Activated T-helper 1 cell treated with anti-CD3 and anti-CD28 coated beads, Interleukin-12 subunit alpha, Interleukin-12 subunit beta, Interleukin-2, Interleukin-4 antibody, amounts not matched to agents 30 ng/mL and 10 ng/mL and 1 ng/mL, durations not matched to agents 14 hours and 24 hours and 36 hours (primary cell): ENCODE measurements at regions of chr22 and their contacts with region 1.

Region 1: GRCh38 chr22:31489604-31490495 is at the start of gene EIF4ENIF1:
- DNase-seq: peak; percentile 81
- H3K4me3 Mint-ChIP-seq: peak within 1 kb of the TSS; percentile 91
- H3K27ac Mint-ChIP-seq: peak within 1 kb of the TSS; percentile 99
- H3K4me1 Mint-ChIP-seq: peaks cover 56% of the 10 kb centered on the region
- H3K27me3 Mint-ChIP-seq: no peaks in the 10 kb centered on the region
- total RNA-seq, gene EIF4ENIF1: 101 and 105 TPM in 2 replicates

Region 2: GRCh38 chr22:31345331-31346254 is 144.3 kb before region 1 on chr22:
- intact Hi-C with region 1: loop called (anchors 2 kb)
- DNase-seq: peak; percentile 85
- H3K4me3 Mint-ChIP-seq: peak overlapping the region; percentile 87
- H3K27ac Mint-ChIP-seq: peak overlapping the region; percentile 89
- H3K4me1 Mint-ChIP-seq: peaks cover 48% of the 10 kb centered on the region
- H3K27me3 Mint-ChIP-seq: no peaks in the 10 kb centered on the region

Region 3: DNA sequence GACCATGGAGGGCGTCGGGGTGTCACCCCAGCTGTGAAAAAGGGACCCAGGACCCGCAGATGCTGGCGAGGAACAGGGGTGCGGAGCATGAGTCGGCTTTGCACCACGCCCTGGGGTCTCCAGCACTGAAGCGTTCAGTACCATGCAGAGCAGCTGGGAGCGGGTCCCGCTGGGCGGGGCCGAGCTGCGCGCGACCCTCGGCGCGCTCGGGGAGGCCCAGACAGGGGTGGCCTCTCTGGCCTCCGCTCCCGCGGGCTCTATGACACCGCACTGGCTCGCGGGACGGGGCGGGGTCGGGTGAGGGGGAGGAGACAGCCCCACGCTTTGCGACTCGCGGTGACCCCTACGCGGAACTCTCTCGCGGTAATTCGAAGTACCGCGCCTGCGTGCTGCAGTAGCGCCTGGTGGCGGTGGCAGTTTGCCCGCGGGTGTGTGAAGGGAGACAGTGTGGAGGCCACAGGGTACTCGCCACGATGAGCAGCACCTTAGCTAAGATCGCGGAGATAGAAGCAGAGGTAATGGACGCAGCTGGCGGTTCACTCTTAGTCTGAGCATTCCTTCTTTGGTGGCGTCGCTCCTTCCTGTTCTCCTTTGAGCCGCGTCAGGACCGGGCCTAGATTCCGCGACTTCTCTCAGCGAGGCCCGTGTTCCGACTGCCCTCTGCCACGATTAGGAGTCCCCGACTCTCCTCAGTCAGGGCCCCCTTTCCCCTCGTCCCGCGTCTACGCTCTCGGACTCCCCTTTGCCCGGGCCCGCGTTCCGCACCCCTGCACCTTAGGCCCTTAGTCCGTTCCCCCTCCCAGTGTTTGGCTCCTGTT is 90.4 kb before region 1 on chr22 and contains the start of gene DRG1:
- intact Hi-C with region 1: loop called (anchors 1 kb)
- DNase-seq: peak; percentile 97
- H3K4me3 Mint-ChIP-seq: peak within 1 kb of the TSS; percentile 100
- H3K27ac Mint-ChIP-seq: peak within 1 kb of the TSS; percentile 93
- H3K4me1 Mint-ChIP-seq: peaks cover 13% of the 10 kb centered on the region
- H3K27me3 Mint-ChIP-seq: peaks cover 2% of the 10 kb centered on the region
- total RNA-seq, gene DRG1: 113 and 125 TPM in 2 replicates

Region 4: GRCh38 chr22:31451709-31452571 is 37.9 kb before region 1 on chr22:
- intact Hi-C with region 1: loop called (anchors 5 kb)
- DNase-seq: peak; percentile 6
- H3K4me3 Mint-ChIP-seq: no peak overlapping the region
- H3K27ac Mint-ChIP-seq: peak overlapping the region; percentile 27
- H3K4me1 Mint-ChIP-seq: no peaks in the 10 kb centered on the region
- H3K27me3 Mint-ChIP-seq: no peaks in the 10 kb centered on the region

Region 5: GRCh38 chr22:31537019-31537535 is 47.2 kb after region 1 on chr22:
- intact Hi-C with region 1: loop called (anchors 1 kb)
- DNase-seq: peak; percentile 64
- H3K4me3 Mint-ChIP-seq: peak overlapping the region; percentile 80
- H3K27ac Mint-ChIP-seq: peak overlapping the region; percentile 97
- H3K4me1 Mint-ChIP-seq: peaks cover 69% of the 10 kb centered on the region
- H3K27me3 Mint-ChIP-seq: no peaks in the 10 kb centered on the region

Region 6: GRCh38 chr22:31561238-31561887 is 71.5 kb after region 1 on chr22:
- intact Hi-C with region 1: loop called (anchors 2 kb)
- DNase-seq: peak; percentile 39
- H3K4me3 Mint-ChIP-seq: no peak overlapping the region
- H3K27ac Mint-ChIP-seq: peak overlapping the region; percentile 77
- H3K4me1 Mint-ChIP-seq: peaks cover 16% of the 10 kb centered on the region
- H3K27me3 Mint-ChIP-seq: no peaks in the 10 kb centered on the region